GM23248 (cell line): ENCODE measurements at regions of chr4 and their contacts with region 1.

Region 1: DNA sequence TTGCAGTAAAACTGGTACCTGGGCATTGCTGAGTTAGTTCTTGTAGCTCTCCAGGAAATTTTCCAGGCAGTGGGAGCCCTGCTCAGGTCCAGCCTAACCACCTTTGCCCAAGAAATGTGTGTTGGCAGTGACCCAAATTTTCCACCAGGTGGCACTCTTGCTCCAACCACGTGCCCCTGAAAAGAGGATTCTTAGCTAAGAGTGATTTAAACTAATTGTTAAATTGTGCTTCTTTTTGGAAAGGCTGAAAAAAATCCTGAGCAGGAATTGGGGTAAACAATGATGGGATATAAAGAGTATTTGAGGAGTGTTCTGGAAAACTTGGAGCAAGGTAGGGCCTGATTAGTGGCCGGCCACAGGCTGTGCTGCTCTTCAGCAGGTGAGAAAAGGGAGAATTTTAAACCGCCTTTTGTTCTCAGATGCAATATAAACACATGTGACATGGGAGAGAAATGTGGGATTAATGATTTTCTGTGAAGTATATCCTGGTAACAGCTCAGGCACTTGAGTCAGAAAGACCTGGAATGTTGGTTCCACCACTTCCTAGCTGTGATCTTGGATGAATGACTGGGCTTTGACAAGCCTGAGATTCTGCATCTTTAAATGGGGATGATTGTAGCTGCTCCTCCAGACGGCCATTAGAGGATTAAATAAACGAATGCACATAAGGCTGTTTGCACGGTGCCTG is 219.6 kb downstream of the PTTG2 start:
- DNase-seq: peak; percentile 73
- H3K4me3 ChIP-seq: no peak overlapping the region
- H3K27ac ChIP-seq: peak overlapping the region; percentile 8; the same call in 1 of the 2 replicates
- H3K4me1 ChIP-seq: peaks cover 21% of the 10 kb centered on the region
- H3K27me3 ChIP-seq: no peaks in the 10 kb centered on the region

Region 2: GRCh38 chr4:37780444-37781150 is 399.2 kb before region 1 on chr4:
- in situ Hi-C with region 1: no loop called
- DNase-seq: peak; percentile 19
- H3K4me3 ChIP-seq: no peak overlapping the region
- H3K27ac ChIP-seq: no peak overlapping the region
- H3K4me1 ChIP-seq: no peaks in the 10 kb centered on the region
- H3K27me3 ChIP-seq: no peaks in the 10 kb centered on the region; the same call in 1 of the 2 replicates

Region 3: DNA sequence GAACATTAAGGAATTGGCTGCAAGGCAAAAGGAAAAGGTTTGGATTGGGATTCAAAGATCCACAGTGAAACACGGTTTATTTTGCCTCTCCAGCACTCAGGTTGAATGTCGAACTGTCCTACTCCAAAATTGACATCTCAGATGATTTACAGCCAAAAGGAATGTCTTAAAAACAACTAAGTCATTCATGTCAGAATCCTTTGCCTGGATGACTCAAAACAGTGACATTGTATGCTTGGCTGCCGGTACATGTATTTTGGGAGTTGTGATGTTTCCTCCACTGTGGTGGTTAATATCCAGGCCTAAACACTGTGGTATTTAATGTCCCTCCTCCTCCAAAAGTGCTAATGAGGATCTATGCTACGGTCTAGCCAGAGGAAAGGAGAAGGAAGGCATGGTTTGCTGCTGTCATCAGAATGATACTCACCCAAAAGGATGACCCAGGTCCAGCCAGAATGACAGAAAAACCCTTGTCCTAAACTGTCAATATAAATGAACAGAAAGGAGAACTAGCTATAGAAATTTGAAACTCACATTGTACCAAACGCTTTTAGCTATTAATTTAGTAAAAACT is 332.4 kb before region 1 on chr4:
- in situ Hi-C with region 1: no loop called
- DNase-seq: no peak
- H3K4me3 ChIP-seq: no peak overlapping the region
- H3K27ac ChIP-seq: no peak overlapping the region
- H3K4me1 ChIP-seq: no peaks in the 10 kb centered on the region
- H3K27me3 ChIP-seq: no peaks in the 10 kb centered on the region

Region 4: GRCh38 chr4:37864786-37865185 is 315.0 kb before region 1 on chr4:
- in situ Hi-C with region 1: no loop called
- DNase-seq: no peak
- H3K4me3 ChIP-seq: no peak overlapping the region
- H3K27ac ChIP-seq: no peak overlapping the region
- H3K4me1 ChIP-seq: no peaks in the 10 kb centered on the region
- H3K27me3 ChIP-seq: no peaks in the 10 kb centered on the region

Region 5: GRCh38 chr4:38078590-38079421 is 101.0 kb before region 1 on chr4:
- in situ Hi-C with region 1: loop called (anchors 10 kb)
- DNase-seq: peak; percentile 88
- H3K4me3 ChIP-seq: no peak overlapping the region
- H3K27ac ChIP-seq: peak overlapping the region; percentile 75
- H3K4me1 ChIP-seq: peaks cover 49% of the 10 kb centered on the region
- H3K27me3 ChIP-seq: no peaks in the 10 kb centered on the region

Region 6: DNA sequence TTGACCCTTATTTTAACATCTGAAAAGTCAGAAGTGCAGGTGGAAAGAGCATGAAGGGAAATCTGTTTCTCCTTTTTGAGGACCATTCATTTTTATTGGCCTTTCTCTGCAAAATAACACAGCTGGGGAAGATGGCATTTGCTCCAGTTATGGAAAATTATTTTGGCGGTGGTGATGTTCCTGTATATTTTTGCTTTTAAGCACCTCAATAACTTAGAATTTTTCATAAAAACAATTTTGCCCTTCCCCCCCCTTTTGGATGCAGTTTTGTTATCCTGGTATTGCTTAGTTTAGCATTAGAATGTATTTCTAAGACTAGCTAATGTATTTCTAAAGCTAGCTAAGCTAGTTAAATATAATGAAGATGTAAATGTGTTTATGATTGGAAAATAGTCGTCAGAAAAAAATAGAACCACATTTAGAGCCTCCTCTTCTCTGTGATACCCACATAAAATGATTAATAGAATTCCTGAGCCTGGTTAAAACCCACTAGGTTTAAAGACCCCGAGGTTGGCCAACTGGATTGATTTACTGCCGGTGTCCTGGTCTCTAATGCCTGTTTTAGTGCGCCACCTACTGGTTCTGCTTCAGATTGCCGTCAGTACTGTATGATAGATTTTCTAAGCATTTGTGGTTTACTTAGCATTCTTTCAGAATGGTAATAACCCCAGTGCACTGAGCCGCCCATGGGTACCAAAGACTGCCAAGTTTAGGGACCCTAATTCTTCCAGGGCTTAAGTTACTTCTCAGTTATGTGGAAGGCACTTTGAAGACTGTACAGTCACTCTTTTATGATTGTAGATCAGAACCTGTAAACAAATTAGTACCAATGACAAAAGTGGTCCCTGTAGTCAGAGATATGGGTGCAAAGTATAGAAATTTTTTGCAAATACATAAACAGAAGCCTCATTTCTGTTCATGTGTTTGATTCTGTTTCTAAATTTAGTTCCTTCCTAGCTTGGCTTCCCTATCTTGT is 495.6 kb after region 1 on chr4:
- in situ Hi-C with region 1: loop called (anchors 10 kb)
- DNase-seq: peak; percentile 80
- H3K4me3 ChIP-seq: 0 out of 2 replicates have a peak overlapping the region, but pooled peaks have one; percentile 18
- H3K27ac ChIP-seq: peak overlapping the region; percentile 27
- H3K4me1 ChIP-seq: peaks cover 86% of the 10 kb centered on the region
- H3K27me3 ChIP-seq: no peaks in the 10 kb centered on the region

Region 7: DNA sequence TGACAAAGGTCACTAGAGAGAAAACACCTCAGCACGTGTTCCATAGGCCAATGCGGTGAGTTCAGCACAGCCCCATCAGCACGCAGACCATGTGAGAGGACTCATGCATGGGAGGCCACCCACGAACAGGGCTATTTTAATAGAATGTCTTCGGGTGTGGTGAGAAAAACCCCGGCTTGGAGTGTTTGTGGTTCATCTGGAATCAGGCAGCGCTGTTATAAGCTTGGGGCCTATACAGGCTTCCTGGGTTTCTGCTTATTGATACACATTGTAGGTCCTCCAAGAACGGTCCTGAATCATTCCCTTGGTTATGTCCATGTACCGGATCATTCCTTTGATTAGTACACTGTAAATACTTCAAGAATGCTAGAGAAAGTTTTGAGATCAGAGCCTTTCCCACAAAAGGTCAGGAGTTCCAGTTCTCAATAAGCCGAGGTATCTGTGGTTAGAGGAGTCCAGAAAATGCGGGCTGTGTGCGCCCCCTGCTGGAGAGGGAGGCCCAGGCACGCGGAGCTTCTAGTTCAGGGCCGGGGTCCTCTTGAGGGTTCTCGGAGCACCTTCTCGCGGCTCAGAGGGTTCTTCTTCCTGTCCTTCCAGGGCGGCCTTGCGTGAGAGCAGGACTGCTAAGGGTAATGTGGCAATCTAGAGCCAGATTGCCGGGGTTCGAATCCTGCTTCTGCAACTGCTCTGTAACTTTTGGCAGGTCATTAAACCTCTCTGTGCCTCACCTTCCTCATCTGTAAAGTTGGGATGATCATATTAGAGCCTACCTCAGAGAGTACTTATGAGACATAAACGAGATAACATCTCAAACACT is 551.2 kb after region 1 on chr4:
- in situ Hi-C with region 1: loop called (anchors 10 kb)
- DNase-seq: peak; percentile 92
- H3K4me3 ChIP-seq: no peak overlapping the region
- H3K27ac ChIP-seq: peak overlapping the region; percentile 73
- H3K4me1 ChIP-seq: peaks cover 8% of the 10 kb centered on the region
- H3K27me3 ChIP-seq: no peaks in the 10 kb centered on the region